AG04449 (cell line): ENCODE measurements at regions of chr12 and their contacts with region 1.

Region 1: DNA sequence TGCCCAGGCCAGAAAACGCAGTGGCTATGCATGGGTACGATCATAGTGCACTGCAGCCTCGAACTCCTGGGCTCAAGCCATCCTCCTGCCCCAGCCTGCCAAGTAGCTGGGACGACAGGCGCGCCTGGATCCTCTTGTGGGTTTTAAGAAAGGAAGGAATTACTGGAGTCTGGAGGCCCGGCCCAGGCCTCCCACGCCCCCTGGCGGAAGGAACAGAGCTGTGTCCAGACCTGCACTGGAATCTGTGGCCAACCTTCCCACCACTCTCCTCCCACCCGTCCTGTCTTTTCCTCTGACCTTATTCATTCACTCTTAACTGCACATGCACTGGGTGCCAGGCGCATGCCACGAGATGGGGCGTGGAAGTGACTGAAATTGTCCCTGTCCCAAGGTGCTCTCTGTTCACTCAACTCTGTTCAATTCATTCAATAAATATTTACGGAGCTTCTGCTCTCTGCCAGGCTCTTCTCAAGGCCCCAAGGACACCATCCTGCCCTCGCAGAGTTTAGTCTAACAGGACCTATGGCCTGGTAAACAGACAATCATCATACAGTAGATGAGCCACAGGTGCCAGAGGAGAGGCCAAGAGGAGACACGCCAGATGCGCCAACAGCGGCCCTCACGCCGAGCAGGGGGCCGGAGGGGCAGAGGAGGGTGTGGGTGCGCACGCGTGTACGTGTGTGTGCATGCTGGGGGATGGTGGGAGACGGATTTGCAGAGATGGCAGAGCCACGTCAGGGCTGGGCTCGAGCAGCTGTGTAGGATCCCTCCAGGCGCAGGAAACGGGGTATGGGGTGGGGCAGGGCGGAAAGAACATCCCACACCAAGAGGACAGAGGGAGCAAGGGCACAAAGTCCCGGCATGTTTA is 13.7 kb upstream of the TMEM106C start:
- DNase-seq: peak; percentile 23
- H3K4me3 ChIP-seq: no peak overlapping the region
- CTCF ChIP-seq: peak; percentile 97

Region 2: GRCh38 chr12:47715393-47715876 is 234.2 kb before region 1 on chr12:
- CTCF ChIA-PET with region 1: interaction called, 27 read pairs
- POLR2A ChIA-PET with region 1: no interaction called
- DNase-seq: peak; percentile 24
- H3K4me3 ChIP-seq: no peak overlapping the region
- CTCF ChIP-seq: peak; percentile 61

Region 3: GRCh38 chr12:47870175-47870781 is 79.4 kb before region 1 on chr12:
- CTCF ChIA-PET with region 1: interaction called, 46 read pairs
- POLR2A ChIA-PET with region 1: no interaction called
- DNase-seq: no peak
- H3K4me3 ChIP-seq: no peak overlapping the region
- CTCF ChIP-seq: peak; percentile 46

Region 4: GRCh38 chr12:47892819-47893218 is 56.9 kb before region 1 on chr12:
- CTCF ChIA-PET with region 1: interaction called, 10 read pairs
- POLR2A ChIA-PET with region 1: no interaction called
- DNase-seq: no peak
- H3K4me3 ChIP-seq: no peak overlapping the region
- CTCF ChIP-seq: no peak

Region 5: GRCh38 chr12:47910486-47910885 is 39.2 kb before region 1 on chr12:
- CTCF ChIA-PET with region 1: interaction called, 20 read pairs
- POLR2A ChIA-PET with region 1: no interaction called
- DNase-seq: no peak
- H3K4me3 ChIP-seq: no peak overlapping the region
- CTCF ChIP-seq: no peak

Region 6: GRCh38 chr12:47935184-47935583 is 14.5 kb before region 1 on chr12:
- CTCF ChIA-PET with region 1: interaction called, 35 read pairs
- POLR2A ChIA-PET with region 1: interaction called, 3 read pairs
- DNase-seq: peak; percentile 58
- H3K4me3 ChIP-seq: no peak overlapping the region
- CTCF ChIP-seq: no peak

Region 7: DNA sequence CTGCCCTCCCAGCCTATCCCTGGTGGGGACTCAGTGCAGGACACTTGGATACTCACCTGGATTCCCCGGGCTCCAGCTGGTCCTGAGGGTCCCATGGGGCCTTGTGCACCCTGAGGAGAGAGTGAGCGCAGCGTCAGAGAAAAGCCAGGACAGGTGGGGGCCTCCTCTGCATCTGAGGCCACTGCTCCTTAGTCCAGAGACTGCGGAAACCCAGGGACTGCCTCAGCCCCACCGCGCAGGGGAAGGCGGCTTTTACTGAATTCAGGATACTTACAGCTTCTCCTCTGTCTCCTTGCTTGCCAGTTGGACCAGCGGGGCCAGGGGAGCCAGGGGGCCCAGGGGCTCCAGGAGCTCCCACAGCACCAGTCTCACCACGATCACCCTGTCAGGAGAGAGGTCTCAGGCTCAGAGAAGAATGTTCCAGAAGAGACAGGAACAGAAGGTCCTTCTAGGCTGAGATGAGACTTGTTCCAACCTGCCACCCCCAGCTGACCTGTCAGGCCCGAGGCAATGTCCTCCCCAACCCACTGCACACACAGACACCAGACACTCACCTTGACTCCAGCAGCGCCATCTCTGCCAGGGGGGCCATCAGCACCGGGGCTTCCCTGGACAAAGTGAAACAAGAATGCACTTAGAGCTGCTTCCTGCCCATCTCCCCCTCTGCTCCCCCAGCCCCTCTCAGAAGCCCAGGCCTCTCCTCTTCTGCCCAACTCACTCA is 27.5 kb after region 1 on chr12:
- CTCF ChIA-PET with region 1: interaction called, 10 read pairs
- POLR2A ChIA-PET with region 1: no interaction called
- DNase-seq: no peak
- H3K4me3 ChIP-seq: no peak overlapping the region
- CTCF ChIP-seq: no peak

Region 8: DNA sequence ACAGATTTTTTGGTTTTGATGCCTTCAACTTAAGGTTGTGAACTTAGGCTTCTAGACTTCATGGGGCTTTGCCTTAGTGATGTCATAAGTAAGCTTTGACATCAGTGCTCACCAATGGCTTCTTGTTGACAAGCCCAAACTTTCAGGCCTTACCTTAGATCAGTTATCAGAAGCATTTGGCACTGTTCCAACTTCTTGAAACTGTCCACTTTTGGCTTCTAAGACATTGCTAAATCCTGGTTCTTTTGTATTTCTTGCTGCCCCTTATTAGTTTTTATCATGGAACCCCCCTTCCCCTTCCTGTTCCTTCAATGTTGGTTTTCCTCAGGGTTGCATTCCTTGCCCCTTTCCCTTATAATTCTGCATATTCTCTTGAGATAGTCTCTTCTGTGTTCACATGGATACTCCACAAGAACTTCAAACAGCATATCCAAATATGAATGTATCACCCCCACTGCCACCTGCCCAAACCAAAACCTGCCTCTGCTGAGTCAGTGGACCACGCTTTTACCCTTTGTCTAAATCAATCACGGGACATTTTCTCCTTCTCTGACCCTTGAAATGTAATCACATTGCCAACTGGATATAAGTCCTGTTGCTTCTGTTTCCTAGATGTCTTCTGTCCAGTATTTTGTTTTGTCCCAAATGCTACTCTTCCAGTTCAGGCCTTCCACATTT is 177.4 kb after region 1 on chr12:
- CTCF ChIA-PET with region 1: no interaction called
- POLR2A ChIA-PET with region 1: no interaction called
- DNase-seq: no peak
- H3K4me3 ChIP-seq: no peak overlapping the region
- CTCF ChIP-seq: no peak

Region 9: DNA sequence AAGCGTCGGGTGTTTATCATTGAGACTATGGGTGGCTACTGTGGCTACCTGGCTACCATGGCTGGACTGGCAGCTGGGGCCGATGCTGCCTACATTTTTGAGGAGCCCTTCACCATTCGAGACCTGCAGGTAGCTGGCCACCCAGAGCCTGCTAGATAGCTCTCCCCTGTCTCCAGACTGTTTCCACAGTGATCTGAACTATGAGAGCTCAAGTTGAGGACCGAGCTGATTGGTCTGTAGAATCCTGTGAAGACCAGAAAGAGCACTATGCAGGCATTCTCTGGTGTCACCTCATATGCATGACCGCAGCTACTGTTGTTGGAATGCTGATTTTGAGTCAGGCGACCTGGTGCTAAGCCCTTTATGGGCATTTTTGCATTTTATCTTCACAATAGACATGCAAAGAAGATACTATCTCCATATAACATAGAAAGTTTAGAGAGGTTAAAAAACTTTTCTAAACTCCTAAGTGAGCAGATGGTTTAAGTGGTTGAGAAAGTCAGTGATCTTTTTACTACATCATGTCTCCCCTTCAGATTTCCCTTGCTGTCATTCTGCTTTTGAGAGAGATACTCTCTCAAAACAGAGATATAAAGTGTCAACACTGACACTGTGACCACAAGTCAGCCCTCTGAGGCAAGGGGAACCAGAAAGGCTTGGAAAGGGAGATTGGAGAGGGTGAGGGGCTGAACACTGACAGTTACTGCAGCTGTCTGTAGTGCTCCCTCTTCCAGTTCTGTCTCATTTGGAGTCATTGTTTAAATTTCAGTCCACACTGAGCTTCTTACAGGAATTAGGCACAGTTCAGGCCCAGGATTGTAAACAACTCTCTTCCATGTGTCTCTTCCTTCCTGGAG is 193.4 kb after region 1 on chr12:
- CTCF ChIA-PET with region 1: no interaction called
- POLR2A ChIA-PET with region 1: no interaction called
- DNase-seq: no peak
- H3K4me3 ChIP-seq: no peak overlapping the region
- CTCF ChIP-seq: no peak

Region 10: DNA sequence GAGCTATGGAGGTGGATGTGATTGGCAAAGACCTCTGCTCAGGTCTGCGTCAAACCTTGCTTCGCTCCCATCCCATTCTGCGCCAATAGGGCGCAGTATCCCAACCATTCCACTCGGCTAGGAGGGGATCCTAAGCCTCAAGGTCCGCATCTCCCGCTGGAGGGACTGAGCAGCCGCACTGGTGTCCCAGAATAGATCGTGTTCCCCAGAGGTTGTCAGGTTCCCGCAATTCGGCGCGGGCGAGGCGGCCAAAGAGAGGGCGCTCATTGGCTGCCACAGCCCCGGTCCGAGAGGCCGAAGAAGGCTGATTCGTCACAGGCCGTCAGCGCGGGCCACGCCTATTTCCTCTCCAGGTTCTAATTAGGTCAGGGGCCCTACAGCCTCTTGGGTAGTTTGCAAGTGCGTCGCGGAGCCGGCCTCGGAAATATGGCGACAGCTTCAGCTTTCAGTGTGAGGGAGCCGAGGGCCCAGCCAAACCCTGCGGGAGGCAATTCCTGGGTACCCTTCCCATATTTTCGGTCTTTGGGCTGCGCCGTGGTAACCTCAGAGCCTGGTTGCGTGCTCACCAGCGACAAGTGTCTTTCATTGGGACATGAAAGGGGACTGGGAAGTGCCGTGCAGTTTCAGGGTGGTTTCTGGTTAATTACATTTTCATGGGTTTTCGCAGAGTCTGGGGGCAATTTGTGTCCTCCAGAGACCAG is 248.4 kb after region 1 on chr12:
- CTCF ChIA-PET with region 1: no interaction called
- POLR2A ChIA-PET with region 1: no interaction called
- DNase-seq: peak; percentile 45
- H3K4me3 ChIP-seq: peak overlapping the region; percentile 85
- CTCF ChIP-seq: peak; percentile 20